ENCODE measurements at regions of chr5 and their contacts with region 1.

Region 1: DNA sequence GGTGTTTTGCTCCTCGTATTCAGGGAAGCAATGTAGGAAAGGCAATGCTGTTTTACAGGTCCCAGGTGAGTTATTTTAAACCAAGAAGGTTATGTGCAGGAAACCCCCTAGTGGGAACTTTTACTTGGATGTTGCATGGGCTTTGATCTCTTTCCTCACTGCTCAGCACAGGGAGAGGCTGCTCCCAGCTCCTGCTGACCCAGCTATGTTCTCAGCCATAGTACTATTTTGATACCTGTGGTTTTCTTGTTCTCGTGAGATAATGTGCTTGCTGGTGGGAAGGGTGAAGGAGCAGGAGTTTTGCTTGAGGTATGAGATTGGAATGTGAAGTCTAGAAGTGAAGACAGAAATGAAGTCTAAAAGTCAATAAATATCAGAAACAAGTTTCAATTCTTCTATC is 265.6 kb upstream of the FBXL7 start:
- DNase-seq: no peak
- ATAC-seq: no peak
- H3K4me3 ChIP-seq: no peak overlapping the region
- H3K4me3 Mint-ChIP-seq: no peak overlapping the region
- H3K27ac ChIP-seq: no peak overlapping the region
- H3K27ac Mint-ChIP-seq: no peak overlapping the region
- H3K4me1 ChIP-seq: no peaks in the 10 kb centered on the region
- H3K4me1 Mint-ChIP-seq: no peaks in the 10 kb centered on the region
- H3K27me3 ChIP-seq: no peaks in the 10 kb centered on the region
- H3K27me3 Mint-ChIP-seq: no peaks in the 10 kb centered on the region

Region 2: GRCh38 chr5:15304914-15305834 is 70.8 kb after region 1 on chr5:
- CTCF ChIA-PET with region 1: no interaction called
- POLR2A ChIA-PET with region 1: interaction called in 1 of 2 experiments, 10 read pairs
- DNase-seq: no peak
- ATAC-seq: no peak
- H3K4me3 ChIP-seq: no peak overlapping the region
- H3K4me3 Mint-ChIP-seq: no peak overlapping the region
- H3K27ac ChIP-seq: no peak overlapping the region
- H3K27ac Mint-ChIP-seq: no peak overlapping the region
- H3K4me1 ChIP-seq: no peaks in the 10 kb centered on the region
- H3K4me1 Mint-ChIP-seq: no peaks in the 10 kb centered on the region
- H3K27me3 ChIP-seq: no peaks in the 10 kb centered on the region
- H3K27me3 Mint-ChIP-seq: no peaks in the 10 kb centered on the region

Measured in T-cell (primary cell).